ENCODE measurements at regions of chr9 and their contacts with region 1.

Region 1: DNA sequence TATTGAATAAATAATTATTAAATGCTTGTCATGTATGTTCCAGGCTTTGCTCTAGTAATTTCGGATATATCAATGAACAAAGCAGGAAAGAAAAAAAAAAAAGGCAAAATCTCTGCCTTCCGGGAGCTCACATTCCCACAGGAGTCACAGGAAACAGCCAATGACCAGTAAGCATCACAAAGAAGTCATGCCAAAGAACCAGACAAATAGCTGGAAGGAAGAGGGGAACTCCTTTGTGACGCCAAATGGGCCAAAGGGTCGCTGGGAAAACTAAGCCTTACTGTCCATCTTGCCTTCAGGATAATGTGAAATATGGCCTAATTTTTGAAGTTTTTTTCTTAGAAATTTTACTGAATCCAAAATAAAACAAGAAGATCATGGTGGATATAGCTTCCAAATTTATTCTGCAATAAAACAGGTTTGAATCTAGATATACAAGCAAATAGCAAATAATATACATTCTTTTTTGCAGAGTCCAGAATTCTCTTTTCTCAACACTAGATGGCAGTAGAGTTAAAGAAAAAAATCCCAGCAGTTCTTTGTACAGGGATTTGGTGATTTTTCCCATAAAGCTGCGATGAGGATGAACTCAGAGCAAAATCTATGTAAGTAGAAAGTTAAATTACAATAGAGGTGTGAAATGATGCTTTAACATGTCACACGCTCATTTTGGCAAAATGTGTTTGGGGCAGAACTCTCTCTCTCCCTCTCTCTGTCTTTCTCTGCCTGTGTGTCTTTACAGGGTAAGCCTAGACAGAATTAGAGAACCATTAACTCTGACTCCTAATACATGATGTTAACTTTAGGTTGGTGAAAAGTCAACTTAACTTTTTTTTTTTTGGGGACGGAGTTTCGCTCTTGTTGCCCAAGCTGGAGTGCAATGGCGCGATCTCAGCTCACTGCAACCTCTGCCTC is 60.0 kb upstream of the TUT7 start:
- DNase-seq: no peak
- H3K4me3 ChIP-seq: no peak overlapping the region
- CTCF ChIP-seq: peak; percentile 31

Region 2: DNA sequence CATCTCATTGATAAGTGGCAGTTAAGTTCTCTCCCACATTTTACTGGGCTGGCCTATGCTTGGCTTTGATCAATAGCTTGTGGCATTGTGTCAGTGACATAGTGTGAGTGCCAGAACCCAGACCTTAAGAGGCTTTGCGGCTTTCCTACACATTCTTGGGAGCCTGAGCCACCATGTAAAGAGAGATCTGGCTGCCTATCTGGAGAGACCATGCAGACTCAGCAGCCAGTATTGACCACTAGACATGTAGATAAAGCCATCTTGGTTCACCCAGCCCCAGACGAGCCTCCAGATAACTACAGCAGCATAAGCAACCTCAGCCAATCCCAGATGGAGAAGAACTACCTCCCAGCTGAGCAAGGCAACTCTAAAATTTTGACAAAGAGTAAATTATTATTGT is 183.4 kb before region 1 on chr9:
- CTCF ChIA-PET with region 1: no interaction called
- POLR2A ChIA-PET with region 1: no interaction called
- DNase-seq: no peak
- H3K4me3 ChIP-seq: no peak overlapping the region
- CTCF ChIP-seq: no peak

Region 3: DNA sequence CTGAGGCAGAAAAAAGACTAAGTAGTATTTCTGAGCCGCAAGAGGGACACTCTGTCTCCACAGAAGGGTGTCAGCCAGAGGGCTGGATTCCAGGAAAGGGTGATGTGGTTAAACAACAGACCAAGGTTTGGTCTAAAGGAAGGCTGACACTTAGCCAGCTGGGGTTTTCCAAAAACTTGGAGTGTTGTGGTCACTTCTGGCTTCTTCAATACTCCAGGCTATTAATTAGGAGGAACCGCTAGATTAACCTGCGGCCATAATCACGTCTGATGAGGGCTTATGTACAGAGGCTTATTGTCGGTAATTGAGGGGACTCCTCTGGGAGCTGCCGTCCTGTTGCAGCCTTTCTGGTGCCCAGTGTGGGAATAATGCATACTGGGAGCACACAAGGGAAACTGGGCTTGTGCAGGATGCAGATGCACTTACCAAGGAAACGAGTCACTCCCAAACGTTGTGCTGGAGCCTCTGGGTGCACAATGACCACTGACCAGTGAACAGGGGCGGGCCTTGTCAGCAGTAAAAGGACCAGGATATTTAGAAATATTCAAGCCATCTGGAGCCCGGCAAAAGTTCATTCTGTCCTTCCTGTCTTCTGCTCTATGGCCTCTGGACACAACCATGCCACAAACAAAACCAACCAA is 10.1 kb after region 1 on chr9:
- CTCF ChIA-PET with region 1: interaction called, 38 read pairs
- POLR2A ChIA-PET with region 1: no interaction called
- DNase-seq: no peak
- H3K4me3 ChIP-seq: no peak overlapping the region
- CTCF ChIP-seq: no peak

Region 4: GRCh38 chr9:86445671-86446070 is 31.4 kb after region 1 on chr9:
- CTCF ChIA-PET with region 1: interaction called, 10 read pairs
- POLR2A ChIA-PET with region 1: no interaction called
- DNase-seq: no peak
- H3K4me3 ChIP-seq: no peak overlapping the region
- CTCF ChIP-seq: no peak

Region 5: DNA sequence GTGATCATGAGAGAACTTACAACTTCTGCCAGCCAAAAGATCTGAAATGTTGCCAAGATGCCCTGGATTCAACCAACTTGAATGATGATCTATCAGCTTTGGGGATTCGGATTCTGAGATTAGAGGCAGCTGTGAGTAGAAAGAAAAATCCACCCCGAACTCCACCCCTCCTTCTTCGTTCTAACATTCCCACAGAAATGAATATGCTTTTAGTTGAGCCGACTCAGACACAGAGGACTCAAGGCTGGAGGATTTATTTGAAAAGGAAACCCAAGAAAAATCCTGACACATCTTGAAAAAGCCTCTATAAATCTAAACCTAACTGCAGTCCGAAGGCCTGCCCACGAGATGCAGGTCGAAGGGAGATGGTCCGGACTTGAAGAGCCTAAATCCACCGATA is 258.1 kb after region 1 on chr9:
- CTCF ChIA-PET with region 1: no interaction called
- POLR2A ChIA-PET with region 1: no interaction called
- DNase-seq: no peak
- H3K4me3 ChIP-seq: no peak overlapping the region
- CTCF ChIP-seq: no peak

Region 6: DNA sequence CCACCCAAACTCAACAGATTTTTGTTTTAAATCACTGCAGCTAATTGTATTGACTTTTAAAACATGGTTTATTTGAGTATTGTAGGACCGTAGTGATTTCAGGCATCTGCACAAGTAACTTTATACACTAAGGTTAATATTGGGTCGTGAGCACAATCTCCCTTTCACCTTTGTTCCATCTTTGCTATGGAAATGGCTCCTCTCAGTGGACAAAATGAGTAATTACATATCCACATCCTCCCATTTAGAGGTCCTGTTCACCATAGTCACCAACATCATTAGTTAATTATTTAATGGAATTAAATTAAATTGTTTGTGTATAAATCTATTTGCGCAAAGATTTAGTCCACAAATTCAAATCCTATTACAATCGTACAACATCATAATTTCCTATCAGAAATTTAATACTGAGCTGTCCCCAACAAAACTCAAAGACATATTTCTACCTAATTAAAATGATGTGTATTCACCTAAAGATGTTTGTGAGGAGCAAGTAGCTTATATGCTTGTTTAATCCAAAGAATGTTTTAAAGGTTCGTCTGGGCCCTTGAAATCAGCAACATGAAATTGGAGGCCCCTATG is 910.5 kb after region 1 on chr9:
- CTCF ChIA-PET with region 1: interaction called, 62 read pairs
- POLR2A ChIA-PET with region 1: no interaction called
- DNase-seq: no peak
- H3K4me3 ChIP-seq: no peak overlapping the region
- CTCF ChIP-seq: peak; percentile 48

Region 7: GRCh38 chr9:87662808-87663528 is 1248.7 kb after region 1 on chr9:
- CTCF ChIA-PET with region 1: interaction called, 15 read pairs
- POLR2A ChIA-PET with region 1: no interaction called
- DNase-seq: no peak
- H3K4me3 ChIP-seq: no peak overlapping the region
- CTCF ChIP-seq: peak; percentile 93

Measured in AG04449 (cell line).